ENCODE measurements at regions of chr7 and their contacts with region 1.

Region 1: GRCh38 chr7:100221231-100221718 is 1.5 kb downstream of the PVRIG start:
- DNase-seq: peak; percentile 82
- ATAC-seq: peak; percentile 60
- H3K4me3 ChIP-seq: peak overlapping the region; percentile 63
- H3K27ac ChIP-seq: peak overlapping the region; percentile 99
- H3K4me1 ChIP-seq: peaks cover 44% of the 10 kb centered on the region
- H3K27me3 ChIP-seq: no peaks in the 10 kb centered on the region
- CTCF ChIP-seq: no peak
- EP300 ChIP-seq: peak; percentile 91 to 94
- POLR2A ChIP-seq: peak; percentile 84
- RAD21 ChIP-seq: no peak

Region 2: DNA sequence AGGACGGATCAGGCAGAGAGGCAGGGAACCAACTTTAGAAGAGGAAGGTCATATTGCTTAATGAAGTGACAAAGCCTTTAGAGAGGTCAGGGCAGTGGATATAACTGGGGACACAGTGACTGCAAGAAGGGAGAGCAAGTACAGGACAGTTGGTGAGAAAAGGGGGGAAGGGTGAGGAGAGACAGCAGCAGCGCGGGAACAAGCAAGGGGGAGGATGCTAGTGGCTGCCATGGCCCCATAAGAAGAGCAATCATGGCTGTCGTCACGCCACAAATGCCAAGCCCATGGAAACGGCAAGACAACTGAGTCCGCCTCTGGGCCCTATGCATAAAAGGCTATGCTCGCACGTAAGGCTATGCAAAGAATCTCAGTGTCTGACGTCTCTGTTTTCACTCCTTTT is 148.8 kb before region 1 on chr7:
- CTCF ChIA-PET with region 1: no interaction called
- POLR2A ChIA-PET with region 1: no interaction called
- RAD21 ChIA-PET with region 1: no interaction called
- SMC1A ChIA-PET with region 1: no interaction called
- in situ Hi-C with region 1: no loop called
- intact Hi-C with region 1: no loop called
- DNase-seq: no peak
- ATAC-seq: no peak
- H3K4me3 ChIP-seq: no peak overlapping the region
- H3K27ac ChIP-seq: no peak overlapping the region
- H3K4me1 ChIP-seq: no peaks in the 10 kb centered on the region
- H3K27me3 ChIP-seq: no peaks in the 10 kb centered on the region
- CTCF ChIP-seq: no peak
- EP300 ChIP-seq: no peak
- POLR2A ChIP-seq: no peak
- RAD21 ChIP-seq: no peak

Region 3: DNA sequence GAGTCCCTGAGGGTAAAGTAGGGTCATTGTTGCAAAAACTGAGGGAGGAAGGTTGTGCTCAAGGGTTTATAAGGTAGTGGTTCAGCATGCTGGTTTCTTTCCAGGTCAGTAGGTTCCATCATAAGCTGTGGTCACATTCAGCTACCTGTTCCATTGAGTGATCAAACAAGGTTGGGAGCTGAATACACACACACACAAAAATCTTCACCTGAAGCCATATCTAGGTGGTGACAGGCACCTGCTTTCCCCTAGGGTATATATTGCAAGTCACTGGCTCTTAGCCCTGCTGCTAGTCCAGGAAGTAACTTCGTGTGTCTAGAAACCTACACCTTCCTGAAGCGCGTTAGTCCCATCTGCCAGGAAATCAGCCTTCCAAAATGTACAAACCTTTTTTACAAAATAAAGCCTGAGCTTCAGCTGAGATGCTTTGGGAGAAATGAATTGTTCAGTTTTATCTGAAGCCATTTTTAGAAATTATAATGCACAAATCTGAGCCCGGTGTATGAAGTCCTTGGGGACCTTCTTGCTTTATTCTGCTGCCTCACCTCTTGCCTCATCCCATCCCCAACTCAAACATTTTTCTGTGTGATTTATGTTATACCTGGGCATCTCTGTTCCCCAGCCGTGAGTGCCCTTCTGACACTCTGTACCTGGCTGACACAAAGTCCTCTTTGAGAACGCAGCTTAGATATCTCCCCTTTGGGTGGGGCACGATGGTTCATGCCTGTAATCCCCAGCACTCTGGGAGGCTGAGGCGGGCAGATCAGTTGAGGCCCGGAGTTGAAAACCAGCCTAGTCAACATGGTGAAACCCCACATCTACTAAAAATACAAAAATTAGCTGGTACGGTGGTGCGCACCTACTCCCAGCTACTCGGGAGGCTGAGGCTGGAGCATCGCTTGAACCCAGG is 83.2 kb before region 1 on chr7:
- CTCF ChIA-PET with region 1: interaction called, 107 read pairs
- POLR2A ChIA-PET with region 1: interaction called, 7 read pairs
- RAD21 ChIA-PET with region 1: interaction called, 49 read pairs
- SMC1A ChIA-PET with region 1: interaction called, 41 read pairs
- in situ Hi-C with region 1: no loop called
- intact Hi-C with region 1: no loop called
- DNase-seq: no peak
- ATAC-seq: peak; percentile 73
- H3K4me3 ChIP-seq: no peak overlapping the region
- H3K27ac ChIP-seq: no peak overlapping the region
- H3K4me1 ChIP-seq: peaks cover 14% of the 10 kb centered on the region
- H3K27me3 ChIP-seq: no peaks in the 10 kb centered on the region
- CTCF ChIP-seq: no peak
- EP300 ChIP-seq: no peak
- POLR2A ChIP-seq: no peak
- RAD21 ChIP-seq: no peak

Region 4: GRCh38 chr7:100200693-100201092 is 20.6 kb before region 1 on chr7:
- CTCF ChIA-PET with region 1: interaction called, 56 read pairs
- POLR2A ChIA-PET with region 1: interaction called, 10 read pairs
- RAD21 ChIA-PET with region 1: interaction called, 11 read pairs
- SMC1A ChIA-PET with region 1: interaction called, 37 read pairs
- in situ Hi-C with region 1: no loop called
- intact Hi-C with region 1: no loop called
- DNase-seq: no peak
- ATAC-seq: no peak
- H3K4me3 ChIP-seq: no peak overlapping the region
- H3K27ac ChIP-seq: no peak overlapping the region
- H3K4me1 ChIP-seq: peaks cover 25% of the 10 kb centered on the region
- H3K27me3 ChIP-seq: no peaks in the 10 kb centered on the region
- CTCF ChIP-seq: no peak
- EP300 ChIP-seq: no peak
- POLR2A ChIP-seq: no peak
- RAD21 ChIP-seq: no peak

Region 5: GRCh38 chr7:100208911-100209408 is 12.3 kb before region 1 on chr7:
- CTCF ChIA-PET with region 1: interaction called, 48 read pairs
- POLR2A ChIA-PET with region 1: interaction called, 25 read pairs
- RAD21 ChIA-PET with region 1: interaction called, 11 read pairs
- SMC1A ChIA-PET with region 1: interaction called, 10 read pairs
- in situ Hi-C with region 1: no loop called
- intact Hi-C with region 1: no loop called
- DNase-seq: peak; percentile 87
- ATAC-seq: peak; percentile 89
- H3K4me3 ChIP-seq: peak overlapping the region; percentile 56; the same call in 1 of the 2 replicates
- H3K27ac ChIP-seq: peak overlapping the region; percentile 57
- H3K4me1 ChIP-seq: peaks cover 51% of the 10 kb centered on the region
- H3K27me3 ChIP-seq: no peaks in the 10 kb centered on the region
- CTCF ChIP-seq: peak in 1 of 3 experiments; percentile 25; a peak in 1 of 6 replicates
- EP300 ChIP-seq: peak; percentile 27 to 74; a peak in 3 of 4 replicates
- POLR2A ChIP-seq: no peak
- RAD21 ChIP-seq: no peak

Region 6: GRCh38 chr7:100428967-100429636 is 207.8 kb after region 1 on chr7:
- CTCF ChIA-PET with region 1: no interaction called
- POLR2A ChIA-PET with region 1: no interaction called
- RAD21 ChIA-PET with region 1: no interaction called
- SMC1A ChIA-PET with region 1: no interaction called
- in situ Hi-C with region 1: no loop called
- intact Hi-C with region 1: no loop called
- DNase-seq: peak; percentile 96
- ATAC-seq: peak; percentile 68
- H3K4me3 ChIP-seq: peak overlapping the region; percentile 74
- H3K27ac ChIP-seq: peak overlapping the region; percentile 99
- H3K4me1 ChIP-seq: peaks cover 28% of the 10 kb centered on the region
- H3K27me3 ChIP-seq: no peaks in the 10 kb centered on the region
- CTCF ChIP-seq: no peak
- EP300 ChIP-seq: peak in 1 of 2 experiments; percentile 72; a peak in 2 of 4 replicates
- POLR2A ChIP-seq: peak; percentile 89
- RAD21 ChIP-seq: no peak